Motor neuron (in vitro differentiated cells): ENCODE measurements at regions of chr7 and their contacts with region 1.

Region 1: DNA sequence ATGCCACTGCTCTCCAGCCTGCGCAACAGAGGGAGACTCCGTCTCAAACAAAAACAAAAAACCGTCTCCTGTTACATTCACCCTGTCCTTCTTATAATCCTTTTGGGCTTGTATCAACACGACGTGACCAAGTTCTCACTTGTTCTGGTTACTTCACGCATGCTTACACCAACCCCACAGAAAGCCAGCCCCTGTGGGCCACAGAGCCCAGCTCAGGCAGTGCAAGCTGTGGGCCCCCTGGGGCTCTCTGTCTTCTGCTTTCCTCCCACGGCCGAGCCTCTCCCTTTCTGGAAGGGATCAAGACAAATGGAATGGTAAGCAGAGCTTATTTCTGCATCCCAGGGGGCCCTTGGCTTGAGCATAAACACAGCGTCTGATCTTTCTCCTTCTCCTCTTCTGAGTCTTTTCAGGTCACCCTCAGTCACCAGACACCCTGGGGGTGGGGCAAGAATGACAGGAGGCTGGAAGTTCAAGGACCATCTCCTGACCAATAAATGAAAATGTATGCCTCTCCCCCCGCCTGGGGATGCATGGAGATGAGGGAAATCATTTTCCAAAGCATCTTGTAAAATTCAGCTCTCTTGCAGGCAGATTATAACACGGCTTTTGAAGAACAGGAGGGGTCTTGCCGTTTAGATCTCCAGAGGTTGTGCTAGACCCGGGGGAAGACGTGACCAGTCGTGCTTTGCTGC is 19.0 kb upstream of the TRIM56 start:
- ATAC-seq: peak in 5 of 8 experiments; percentile 45 to 84 (median 82)
- H3K4me3 ChIP-seq: no peak overlapping the region
- H3K27ac ChIP-seq: peak overlapping the region in 1 of 2 donors; percentile 54
- H3K4me1 ChIP-seq: peaks cover 9 to 14% of the 10 kb centered on the region in 2 donors

Region 2: DNA sequence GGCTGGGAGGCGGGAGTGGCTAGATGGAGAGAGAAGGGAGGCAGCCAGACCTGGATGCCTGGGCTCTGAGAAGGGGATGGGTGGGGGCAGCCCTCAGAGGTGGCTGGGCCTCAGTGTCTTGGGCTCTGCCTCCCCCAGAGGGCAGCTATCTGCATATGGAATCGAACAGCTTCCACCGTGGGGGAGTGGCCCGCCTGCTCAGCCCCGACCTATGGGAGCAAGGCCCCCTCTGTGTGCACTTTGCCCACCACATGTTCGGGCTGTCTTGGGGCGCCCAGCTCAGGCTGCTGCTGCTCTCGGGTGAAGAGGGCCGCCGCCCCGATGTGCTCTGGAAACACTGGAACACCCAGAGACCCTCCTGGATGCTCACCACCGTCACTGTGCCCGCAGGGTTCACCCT is 329.6 kb before region 1 on chr7:
- in situ Hi-C with region 1: no loop called
- ATAC-seq: no peak
- H3K4me3 ChIP-seq: no peak overlapping the region
- H3K27ac ChIP-seq: no peak overlapping the region
- H3K4me1 ChIP-seq: no peaks in the 10 kb centered on the region

Region 3: GRCh38 chr7:100889761-100890634 is 176.3 kb before region 1 on chr7:
- in situ Hi-C with region 1: loop called in 3 of 9 experiments (anchors 10 to 25 kb)
- ATAC-seq: peak; percentile 77 to 89 (median 80)
- H3K4me3 ChIP-seq: peak overlapping the region; percentile 45 to 66 (median 55)
- H3K27ac ChIP-seq: peak overlapping the region; percentile 78 to 94
- H3K4me1 ChIP-seq: peaks cover 24 to 27% of the 10 kb centered on the region in 2 donors

Region 4: GRCh38 chr7:100965723-100966541 is 100.4 kb before region 1 on chr7:
- in situ Hi-C with region 1: loop called in 1 of 9 experiments (anchors 10 kb)
- ATAC-seq: peak; percentile 86 to 95 (median 89)
- H3K4me3 ChIP-seq: peak overlapping the region; percentile 6 to 26 (median 18)
- H3K27ac ChIP-seq: peak overlapping the region in 1 of 2 donors; percentile 8
- H3K4me1 ChIP-seq: peaks cover 0 to 7% of the 10 kb centered on the region in 2 donors